Aorta (tissue), 5 donors: ENCODE measurements at regions of chr1 and their contacts with region 1.

Region 1: DNA sequence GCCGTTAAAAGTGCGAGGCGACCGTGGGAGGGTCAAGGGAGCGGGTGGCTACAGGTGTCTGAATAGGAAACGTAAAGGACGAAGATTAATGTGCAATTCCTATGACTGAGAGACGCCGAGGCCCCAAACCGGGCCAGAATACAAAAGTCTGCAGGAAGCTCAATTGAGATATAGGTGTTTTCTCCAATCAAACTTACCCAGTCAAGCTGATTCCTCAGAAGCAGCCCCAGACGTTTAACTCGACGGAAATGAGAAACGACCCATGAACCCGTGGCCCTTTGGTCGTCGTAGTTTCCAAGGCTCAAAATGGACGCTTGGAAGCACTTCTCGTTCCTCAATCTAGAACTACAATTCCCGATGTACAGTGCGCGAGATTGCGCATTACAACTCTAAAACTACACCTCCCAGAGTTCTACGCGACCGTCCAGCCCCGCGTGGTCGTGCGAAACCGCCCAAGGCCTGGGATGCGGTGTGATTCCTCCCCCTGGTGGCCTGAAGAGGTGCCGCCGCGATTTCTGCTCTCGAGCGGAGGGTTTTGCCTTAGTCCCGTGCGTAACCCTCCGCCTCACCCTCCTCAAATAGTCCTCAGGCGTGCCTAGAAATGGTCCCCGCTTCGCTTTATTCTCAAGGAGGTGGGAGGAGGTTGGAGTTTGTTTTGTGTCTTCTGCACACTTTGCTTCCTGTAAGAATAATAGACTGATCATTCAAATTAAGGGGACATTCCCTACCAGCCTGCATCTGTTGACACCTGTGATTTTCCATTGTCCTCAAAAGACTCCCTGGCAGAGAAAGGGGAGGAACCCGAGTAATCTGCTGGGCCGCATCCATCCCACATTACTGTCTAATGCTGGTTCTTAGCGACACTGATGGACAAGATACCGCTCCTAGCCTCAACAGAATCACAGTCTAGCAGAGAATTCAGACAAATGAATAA is at the start of gene PAFAH2:
- DNase-seq: peak; percentile 98 to 99
- ATAC-seq: peak; percentile 98
- H3K4me3 ChIP-seq: peak within 1 kb of the TSS; percentile 53 to 88
- H3K27ac ChIP-seq: peak within 1 kb of the TSS in 1 of 2 donors; percentile 48
- H3K4me1 ChIP-seq: no peaks in the 10 kb centered on the region
- H3K27me3 ChIP-seq: no peaks in the 10 kb centered on the region
- total RNA-seq, gene PAFAH2: 4.8 to 6.4 TPM

Region 2: DNA sequence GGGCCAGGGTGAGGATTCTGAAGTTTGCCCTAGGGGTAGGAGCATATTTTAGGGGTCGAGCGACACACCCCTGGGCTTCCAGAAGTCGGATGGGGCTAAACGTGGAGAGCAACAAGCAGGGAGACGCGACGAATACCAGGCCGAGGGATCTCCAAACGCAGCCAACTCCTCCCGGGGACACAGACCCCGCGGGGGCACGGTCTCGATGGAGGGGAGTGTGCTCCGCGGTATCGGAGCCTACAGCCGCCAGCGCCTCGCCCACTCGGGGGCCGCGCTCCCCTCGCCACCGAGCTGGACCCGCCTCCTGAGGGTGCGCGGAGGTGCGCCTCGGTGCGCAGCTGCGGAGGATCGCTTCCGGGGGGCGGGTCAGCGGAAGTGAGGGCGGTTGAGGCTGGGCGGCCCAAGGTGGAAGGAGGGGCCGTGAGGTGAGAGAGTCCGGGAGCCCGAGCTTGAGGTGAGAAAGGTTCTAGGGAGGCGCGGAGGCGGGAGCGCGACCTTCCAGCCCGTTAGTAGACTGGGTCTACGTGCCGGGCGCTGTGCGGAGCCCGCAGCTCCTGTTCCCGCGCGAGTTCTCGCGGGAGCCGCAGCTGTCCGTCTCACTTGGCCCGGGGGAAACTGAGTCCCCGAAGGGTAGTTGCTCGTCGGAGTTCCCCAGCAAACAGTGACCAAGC is 178.4 kb before region 1 on chr1 and contains the start of gene MTFR1L:
- intact Hi-C with region 1: loop called (anchors 5 kb)
- DNase-seq: peak; percentile 93 to 96
- ATAC-seq: peak; percentile 94
- H3K4me3 ChIP-seq: peak within 1 kb of the TSS; percentile 77 to 88
- H3K27ac ChIP-seq: peak within 1 kb of the TSS in 1 of 2 donors; percentile 80
- H3K4me1 ChIP-seq: no peaks in the 10 kb centered on the region
- H3K27me3 ChIP-seq: no peaks in the 10 kb centered on the region
- total RNA-seq, gene MTFR1L: 54.0 to 59.6 TPM

Region 3: GRCh38 chr1:25895365-25895993 is 102.6 kb before region 1 on chr1:
- intact Hi-C with region 1: loop called (anchors 1 to 2 kb)
- DNase-seq: peak; percentile 94 to 96
- ATAC-seq: peak; percentile 96
- H3K4me3 ChIP-seq: no peak overlapping the region
- H3K27ac ChIP-seq: no peak overlapping the region
- H3K4me1 ChIP-seq: no peaks in the 10 kb centered on the region
- H3K27me3 ChIP-seq: no peaks in the 10 kb centered on the region

Region 4: GRCh38 chr1:25905680-25906643 is 92.1 kb before region 1 on chr1 and contains the start of gene STMN1:
- intact Hi-C with region 1: loop called in 1 of 2 experiments (anchors 2 kb)
- DNase-seq: peak; percentile 93 to 96
- ATAC-seq: peak; percentile 94
- H3K4me3 ChIP-seq: peak within 1 kb of the TSS; percentile 82 to 86
- H3K27ac ChIP-seq: peak within 1 kb of the TSS in 1 of 2 donors; percentile 25
- H3K4me1 ChIP-seq: no peaks in the 10 kb centered on the region
- H3K27me3 ChIP-seq: no peaks in the 10 kb centered on the region
- total RNA-seq, gene STMN1: 34.5 to 37.6 TPM

Region 5: GRCh38 chr1:26126321-26127084 is 128.4 kb after region 1 on chr1:
- intact Hi-C with region 1: no loop called
- DNase-seq: no peak
- ATAC-seq: no peak
- H3K4me3 ChIP-seq: no peak overlapping the region
- H3K27ac ChIP-seq: no peak overlapping the region
- H3K4me1 ChIP-seq: no peaks in the 10 kb centered on the region
- H3K27me3 ChIP-seq: no peaks in the 10 kb centered on the region

Region 6: GRCh38 chr1:26181586-26182382 is 183.7 kb after region 1 on chr1:
- intact Hi-C with region 1: no loop called
- DNase-seq: no peak
- ATAC-seq: no peak
- H3K4me3 ChIP-seq: no peak overlapping the region
- H3K27ac ChIP-seq: no peak overlapping the region
- H3K4me1 ChIP-seq: no peaks in the 10 kb centered on the region
- H3K27me3 ChIP-seq: peaks cover 0 to 1% of the 10 kb centered on the region in 2 donors